ENCODE measurements at regions of chr5 and their contacts with region 1.

Region 1: DNA sequence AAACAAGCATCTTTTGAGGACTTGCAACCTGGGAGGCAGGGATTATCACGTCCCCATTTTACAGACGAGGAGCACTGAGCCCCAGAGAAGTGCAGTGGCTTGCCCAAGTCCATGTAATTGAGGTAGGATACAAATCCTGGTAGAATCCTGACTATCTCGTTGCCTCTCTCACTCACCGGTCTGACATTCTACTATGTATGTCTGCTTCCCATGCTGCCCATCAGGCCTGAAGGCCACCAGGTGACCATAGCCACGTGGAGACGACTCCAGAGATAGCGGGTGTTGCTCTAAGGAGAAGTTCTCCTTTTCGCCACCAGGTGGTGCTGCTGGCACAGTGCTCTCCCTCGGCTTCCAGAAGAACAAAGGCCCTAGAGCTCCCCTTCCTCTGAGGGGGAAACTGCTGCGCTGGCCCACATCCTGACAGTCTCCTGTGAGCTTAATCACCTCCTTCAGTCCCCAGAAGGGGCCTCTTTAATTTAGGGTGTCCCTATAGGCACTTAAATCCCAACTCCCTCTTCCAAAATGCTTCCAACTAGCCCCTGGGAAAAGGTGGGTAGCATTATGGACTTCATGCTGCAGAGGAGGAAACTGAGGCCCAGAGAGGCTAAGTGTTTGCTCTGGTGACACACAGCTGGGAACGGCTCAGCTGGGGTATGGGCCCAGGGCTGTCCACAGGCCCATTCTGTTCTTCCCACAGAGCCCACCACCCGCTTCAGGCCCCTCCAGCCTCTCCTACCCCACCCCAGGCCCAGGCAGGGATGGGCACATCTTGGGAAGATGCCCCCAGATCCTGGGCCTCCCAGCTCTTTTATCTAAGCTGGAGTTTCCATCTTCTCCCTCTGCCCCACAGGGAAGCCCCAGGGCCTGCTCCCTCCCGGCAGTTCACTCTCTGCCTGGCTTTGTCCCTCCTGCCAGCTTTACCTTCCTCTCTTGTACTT is 6.4 kb downstream of the SLC34A1 start:
- DNase-seq: peak; percentile 89 to 95
- H3K4me3 ChIP-seq: no peak overlapping the region
- H3K27ac ChIP-seq: no peak overlapping the region
- H3K4me1 ChIP-seq: peaks cover 0 to 3% (median 0%) of the 10 kb centered on the region in 4 experiments; a peak in 4 of 7 replicates
- H3K27me3 ChIP-seq: peaks cover 0 to 17% (median 10%) of the 10 kb centered on the region in 4 experiments; a peak in 6 of 7 replicates
- CTCF ChIP-seq: peak in 2 of 3 experiments; percentile 97; a peak in 3 of 4 replicates
- EP300 ChIP-seq: no peak
- POLR2A ChIP-seq: no peak
- RAD21 ChIP-seq: peak; percentile 93 to 97

Region 2: GRCh38 chr5:177189416-177189815 is 201.2 kb before region 1 on chr5:
- CTCF ChIA-PET with region 1: no interaction called
- POLR2A ChIA-PET with region 1: no interaction called
- DNase-seq: no peak
- H3K4me3 ChIP-seq: no peak overlapping the region
- H3K27ac ChIP-seq: no peak overlapping the region
- H3K4me1 ChIP-seq: no peaks in the 10 kb centered on the region; a peak in 1 of 7 replicates
- H3K27me3 ChIP-seq: no peaks in the 10 kb centered on the region
- CTCF ChIP-seq: no peak
- EP300 ChIP-seq: no peak
- POLR2A ChIP-seq: no peak
- RAD21 ChIP-seq: no peak

Region 3: DNA sequence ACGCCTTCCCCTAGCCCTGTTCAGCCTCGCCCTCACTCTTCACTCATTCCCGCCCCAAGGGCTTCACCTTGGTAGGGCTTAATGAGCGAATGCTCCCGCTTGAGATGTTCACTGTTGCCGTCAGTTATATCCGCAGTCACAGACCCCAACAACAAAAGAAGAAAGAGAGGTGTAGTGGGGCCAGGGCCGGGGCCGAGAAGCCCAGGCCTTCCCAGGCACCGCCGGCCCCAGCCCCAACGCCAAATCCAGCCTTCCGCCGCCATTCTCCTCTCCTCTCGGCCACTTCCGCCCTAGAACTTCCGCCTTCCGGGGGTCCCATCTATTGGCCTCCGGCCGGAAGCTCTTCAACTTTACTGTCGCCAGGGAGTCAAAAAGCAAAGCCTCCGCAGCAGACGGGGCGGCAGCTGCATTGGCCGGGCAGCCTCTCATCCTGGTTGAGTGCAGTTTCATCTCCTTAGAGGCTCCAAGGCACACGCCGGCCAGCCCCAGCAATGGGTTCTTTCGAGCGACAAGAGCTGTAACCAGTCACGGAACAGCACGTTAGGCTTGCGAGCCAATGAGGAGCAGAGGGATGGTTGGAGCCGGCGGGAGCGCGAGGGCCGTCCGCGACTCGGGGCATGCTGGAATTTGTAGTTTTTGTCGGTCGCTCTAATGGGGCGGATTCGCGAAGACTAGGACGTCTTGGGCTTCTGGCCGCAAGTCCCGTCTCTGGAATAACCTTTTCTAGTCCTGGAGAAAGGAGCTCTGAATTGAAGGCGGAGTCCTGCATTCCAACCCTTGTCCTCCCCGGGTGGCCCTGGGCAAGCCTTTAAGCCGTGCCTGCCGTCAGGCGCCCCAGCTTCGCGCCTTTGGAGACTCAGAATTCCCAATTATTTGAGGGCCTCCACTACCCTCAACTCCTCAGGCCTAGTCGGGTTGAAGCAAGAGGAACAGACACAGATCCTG is 39.0 kb before region 1 on chr5 and contains the start of gene LMAN2:
- CTCF ChIA-PET with region 1: interaction called, 15 read pairs
- POLR2A ChIA-PET with region 1: no interaction called
- DNase-seq: peak; percentile 80 to 90
- H3K4me3 ChIP-seq: peak within 1 kb of the TSS; percentile 80 to 100 (median 94)
- H3K27ac ChIP-seq: peak within 1 kb of the TSS; percentile 94
- H3K4me1 ChIP-seq: peaks cover 0 to 13% (median 4%) of the 10 kb centered on the region in 4 experiments; a peak in 3 of 7 replicates
- H3K27me3 ChIP-seq: 0 out of 7 replicates have a peak, but pooled peaks cover 0 to 5% (median 0%) of the 10 kb centered on the region in 4 experiments
- CTCF ChIP-seq: no peak
- EP300 ChIP-seq: no peak
- POLR2A ChIP-seq: peak in 1 of 2 experiments; percentile 83; a peak in 2 of 3 replicates
- RAD21 ChIP-seq: no peak
- total RNA-seq, gene LMAN2: 116 and 119 TPM in 2 replicates

Region 4: GRCh38 chr5:177412603-177413233 is 22.1 kb after region 1 on chr5:
- CTCF ChIA-PET with region 1: interaction called, 13 read pairs
- POLR2A ChIA-PET with region 1: no interaction called
- DNase-seq: no peak
- H3K4me3 ChIP-seq: no peak overlapping the region
- H3K27ac ChIP-seq: no peak overlapping the region
- H3K4me1 ChIP-seq: no peaks in the 10 kb centered on the region; a peak in 1 of 7 replicates
- H3K27me3 ChIP-seq: peaks cover 0 to 14% (median 2%) of the 10 kb centered on the region in 4 experiments; a peak in 5 of 7 replicates
- CTCF ChIP-seq: no peak
- EP300 ChIP-seq: no peak
- POLR2A ChIP-seq: no peak
- RAD21 ChIP-seq: no peak

Region 5: GRCh38 chr5:177425801-177426565 is 35.4 kb after region 1 on chr5:
- CTCF ChIA-PET with region 1: interaction called, 34 read pairs
- POLR2A ChIA-PET with region 1: interaction called, 5 read pairs
- DNase-seq: peak; percentile 97 to 100
- H3K4me3 ChIP-seq: peak overlapping the region; percentile 52 to 71 (median 64)
- H3K27ac ChIP-seq: peak overlapping the region; percentile 86; the same call in 1 of the 2 replicates
- H3K4me1 ChIP-seq: peaks cover 4 to 14% (median 9%) of the 10 kb centered on the region in 4 experiments; a peak in 6 of 7 replicates
- H3K27me3 ChIP-seq: no peaks in the 10 kb centered on the region
- CTCF ChIP-seq: no peak
- EP300 ChIP-seq: peak in 1 of 2 experiments; percentile 69; a peak in 1 of 3 replicates
- POLR2A ChIP-seq: peak in 1 of 2 experiments; percentile 95; a peak in 2 of 3 replicates
- RAD21 ChIP-seq: no peak

Region 6: GRCh38 chr5:177440211-177440971 is 49.8 kb after region 1 on chr5:
- CTCF ChIA-PET with region 1: interaction called, 430 read pairs
- POLR2A ChIA-PET with region 1: interaction called, 49 read pairs
- DNase-seq: no peak
- H3K4me3 ChIP-seq: no peak overlapping the region
- H3K27ac ChIP-seq: peak overlapping the region; percentile 55; the same call in 1 of the 2 replicates
- H3K4me1 ChIP-seq: peaks cover 0 to 13% (median 6%) of the 10 kb centered on the region in 4 experiments; a peak in 5 of 7 replicates
- H3K27me3 ChIP-seq: peaks cover 0 to 7% (median 0%) of the 10 kb centered on the region in 4 experiments; a peak in 4 of 7 replicates
- CTCF ChIP-seq: no peak
- EP300 ChIP-seq: no peak
- POLR2A ChIP-seq: no peak; a peak in 1 of 3 replicates
- RAD21 ChIP-seq: no peak

Region 7: GRCh38 chr5:177454397-177455035 is 63.9 kb after region 1 on chr5:
- CTCF ChIA-PET with region 1: interaction called, 430 read pairs
- POLR2A ChIA-PET with region 1: interaction called, 51 read pairs
- DNase-seq: peak in 1 of 2 experiments; percentile 98
- H3K4me3 ChIP-seq: peak overlapping the region; percentile 47 to 86 (median 81)
- H3K27ac ChIP-seq: peak overlapping the region; percentile 86; the same call in 1 of the 2 replicates
- H3K4me1 ChIP-seq: peaks cover 0 to 22% (median 10%) of the 10 kb centered on the region in 4 experiments; a peak in 6 of 7 replicates
- H3K27me3 ChIP-seq: peaks cover 0 to 10% (median 8%) of the 10 kb centered on the region in 4 experiments; a peak in 2 of 7 replicates
- CTCF ChIP-seq: peak in 2 of 3 experiments; percentile 82 to 88; a peak in 3 of 4 replicates
- EP300 ChIP-seq: peak in 1 of 2 experiments; percentile 67; a peak in 1 of 3 replicates
- POLR2A ChIP-seq: peak in 1 of 2 experiments; percentile 63; a peak in 1 of 3 replicates
- RAD21 ChIP-seq: peak; percentile 72 to 85

Region 8: DNA sequence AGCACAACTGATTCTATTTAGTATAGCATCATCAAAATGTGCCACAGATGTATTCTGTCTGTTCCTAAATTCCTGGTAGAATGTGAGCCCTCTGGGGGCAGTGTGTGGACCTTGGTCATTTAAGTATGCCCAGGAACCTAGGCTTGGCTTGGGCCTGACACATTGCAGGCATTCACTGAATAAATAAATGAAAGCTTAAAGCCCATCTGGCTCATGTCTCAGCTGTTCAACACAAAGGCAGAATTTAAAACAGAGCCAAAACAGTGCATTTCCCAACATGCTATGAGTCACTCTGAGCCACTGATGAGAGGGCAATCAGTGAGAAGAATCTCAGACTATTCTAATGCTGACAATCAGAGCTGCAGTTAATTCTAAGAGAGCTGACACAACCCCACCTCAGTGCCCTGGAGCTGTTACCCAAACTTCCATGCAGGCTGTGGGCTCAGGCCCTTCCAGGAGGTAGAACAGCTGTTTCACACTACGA is 155.7 kb after region 1 on chr5:
- CTCF ChIA-PET with region 1: no interaction called
- POLR2A ChIA-PET with region 1: no interaction called
- DNase-seq: peak in 1 of 2 experiments; percentile 31
- H3K4me3 ChIP-seq: no peak overlapping the region
- H3K27ac ChIP-seq: no peak overlapping the region
- H3K4me1 ChIP-seq: no peaks in the 10 kb centered on the region
- H3K27me3 ChIP-seq: no peaks in the 10 kb centered on the region
- CTCF ChIP-seq: no peak
- EP300 ChIP-seq: no peak
- POLR2A ChIP-seq: no peak
- RAD21 ChIP-seq: no peak

Region 9: DNA sequence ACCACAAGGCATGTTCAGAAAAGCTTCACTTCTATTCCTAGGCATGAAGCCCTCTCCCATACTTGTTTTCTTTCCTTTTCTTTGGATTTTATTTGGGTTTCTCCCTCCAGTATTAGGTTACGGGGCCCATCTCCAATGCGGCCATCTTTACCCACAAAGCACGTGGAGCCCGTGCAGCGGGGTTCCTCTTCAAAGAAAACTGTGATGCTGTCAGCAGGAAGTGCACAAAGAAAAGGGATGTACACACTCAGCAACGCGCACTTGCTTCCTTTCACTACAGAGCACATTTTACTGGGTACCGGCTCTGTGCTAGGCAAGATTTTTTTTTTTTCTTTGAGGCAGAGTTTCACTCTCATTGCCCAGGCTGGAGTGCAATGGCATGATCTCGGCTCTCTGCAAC is 1093.0 kb after region 1 on chr5:
- CTCF ChIA-PET with region 1: no interaction called
- POLR2A ChIA-PET with region 1: no interaction called
- DNase-seq: no peak
- H3K4me3 ChIP-seq: no peak overlapping the region
- H3K27ac ChIP-seq: no peak overlapping the region
- H3K4me1 ChIP-seq: peaks cover 0 to 11% (median 7%) of the 10 kb centered on the region in 4 experiments; a peak in 4 of 7 replicates
- H3K27me3 ChIP-seq: no peaks in the 10 kb centered on the region; a peak in 1 of 7 replicates
- CTCF ChIP-seq: no peak
- EP300 ChIP-seq: no peak
- POLR2A ChIP-seq: no peak
- RAD21 ChIP-seq: no peak